IMR-90 (cell line): ENCODE measurements at regions of chr2 and their contacts with region 1.

Region 1: DNA sequence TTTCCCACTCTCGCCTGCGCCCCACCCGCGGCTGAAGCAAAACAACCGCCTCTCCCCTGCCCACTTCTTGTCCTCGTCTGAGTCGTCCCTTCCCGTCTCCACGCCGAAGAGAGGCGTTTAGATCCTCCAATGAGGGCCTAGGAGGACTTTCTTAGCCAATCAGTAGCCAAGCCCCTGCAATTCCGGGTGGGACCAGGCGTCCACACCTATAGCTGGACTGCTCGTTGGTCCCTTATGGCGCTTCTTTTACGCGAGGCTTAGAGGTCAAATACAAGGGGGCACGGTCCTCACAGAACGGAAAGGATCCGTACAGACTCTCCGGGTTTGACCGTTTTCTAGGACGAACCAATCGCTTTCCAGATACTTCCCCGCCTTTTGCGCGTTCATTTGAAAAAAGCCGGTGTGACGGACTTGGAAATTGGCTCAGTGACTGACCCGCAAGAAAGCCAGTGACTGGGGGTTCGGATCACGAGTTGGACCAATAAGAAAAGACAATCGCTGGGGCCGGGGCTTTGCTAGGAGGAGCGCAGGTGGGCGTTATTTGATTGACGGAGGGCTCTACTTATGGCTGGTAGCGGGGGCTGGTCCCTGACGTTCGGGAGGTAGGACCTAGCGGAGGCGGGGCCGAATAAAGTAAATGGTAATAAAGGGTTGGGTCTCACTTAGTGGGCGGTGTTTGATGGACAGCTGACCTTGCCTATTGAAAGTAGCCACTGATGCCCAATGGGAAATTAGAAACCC is 565 bp upstream of the PPM1B start:
- DNase-seq: peak; percentile 100
- ATAC-seq: peak; percentile 84
- H3K4me3 ChIP-seq: peak overlapping the region; percentile 69
- H3K27ac ChIP-seq: peak overlapping the region; percentile 76
- H3K4me1 ChIP-seq: peaks cover 2% of the 10 kb centered on the region; the same call in 1 of the 2 replicates
- H3K27me3 ChIP-seq: no peaks in the 10 kb centered on the region
- CTCF ChIP-seq: no peak
- POLR2A ChIP-seq: peak; percentile 51; the same call in 1 of the 2 replicates
- RAD21 ChIP-seq: no peak

Region 2: GRCh38 chr2:43872151-43872550 is 296.0 kb before region 1 on chr2:
- CTCF ChIA-PET with region 1: no interaction called
- POLR2A ChIA-PET with region 1: no interaction called
- dilution Hi-C with region 1: no loop called
- in situ Hi-C with region 1: no loop called
- intact Hi-C with region 1: no loop called
- DNase-seq: no peak
- ATAC-seq: no peak
- H3K4me3 ChIP-seq: no peak overlapping the region
- H3K27ac ChIP-seq: no peak overlapping the region
- H3K4me1 ChIP-seq: no peaks in the 10 kb centered on the region
- H3K27me3 ChIP-seq: peaks cover 35% of the 10 kb centered on the region
- CTCF ChIP-seq: no peak
- POLR2A ChIP-seq: no peak
- RAD21 ChIP-seq: no peak

Region 3: DNA sequence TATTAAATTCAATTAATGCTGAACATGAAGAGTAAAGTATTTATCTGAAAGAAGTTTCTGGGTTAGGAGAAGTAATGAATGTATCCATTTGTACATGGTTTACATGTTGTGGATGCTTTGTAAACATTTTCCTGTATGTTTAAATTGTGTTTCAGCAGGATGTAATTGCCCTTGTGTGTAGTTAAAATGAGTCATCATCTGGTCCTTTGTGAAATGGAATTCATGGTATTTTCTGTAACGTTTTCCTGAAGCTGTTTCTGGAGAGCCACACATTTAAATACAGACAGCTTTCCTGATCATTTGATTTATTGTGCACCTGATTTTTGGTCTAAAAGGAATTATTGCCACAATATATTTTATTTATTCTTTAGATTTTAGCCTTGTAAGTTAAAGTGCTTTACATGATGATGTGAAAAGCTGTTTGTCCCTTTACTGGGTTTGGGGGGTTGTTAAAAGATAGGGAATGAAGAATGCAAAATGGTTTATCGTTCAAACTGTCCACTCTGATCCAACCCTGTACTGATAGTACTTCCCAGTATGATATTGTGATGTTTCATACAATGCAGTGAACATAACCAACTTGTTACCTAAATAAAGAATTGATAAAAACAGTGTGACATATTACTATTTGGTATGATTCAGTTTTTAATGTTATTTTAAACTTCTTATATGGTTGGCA is 65.5 kb after region 1 on chr2:
- CTCF ChIA-PET with region 1: no interaction called
- POLR2A ChIA-PET with region 1: no interaction called
- dilution Hi-C with region 1: no loop called
- in situ Hi-C with region 1: no loop called
- intact Hi-C with region 1: loop called (anchors 2 kb)
- DNase-seq: peak; percentile 85
- ATAC-seq: peak; percentile 94
- H3K4me3 ChIP-seq: no peak overlapping the region
- H3K27ac ChIP-seq: peak overlapping the region; percentile 50; the same call in 1 of the 2 replicates
- H3K4me1 ChIP-seq: peaks cover 2% of the 10 kb centered on the region; the same call in 1 of the 2 replicates
- H3K27me3 ChIP-seq: no peaks in the 10 kb centered on the region
- CTCF ChIP-seq: no peak
- POLR2A ChIP-seq: no peak
- RAD21 ChIP-seq: 0 out of 2 replicates have a peak, but pooled peaks have one; percentile 4

Region 4: GRCh38 chr2:44291281-44292248 is 123.5 kb after region 1 on chr2:
- CTCF ChIA-PET with region 1: no interaction called
- POLR2A ChIA-PET with region 1: no interaction called
- dilution Hi-C with region 1: no loop called
- in situ Hi-C with region 1: no loop called
- intact Hi-C with region 1: loop called (anchors 1 kb)
- DNase-seq: peak; percentile 75
- ATAC-seq: peak; percentile 95
- H3K4me3 ChIP-seq: no peak overlapping the region
- H3K27ac ChIP-seq: no peak overlapping the region
- H3K4me1 ChIP-seq: peaks cover 7% of the 10 kb centered on the region
- H3K27me3 ChIP-seq: peaks cover 20% of the 10 kb centered on the region
- CTCF ChIP-seq: peak; percentile 74
- POLR2A ChIP-seq: no peak
- RAD21 ChIP-seq: peak; percentile 79

Region 5: DNA sequence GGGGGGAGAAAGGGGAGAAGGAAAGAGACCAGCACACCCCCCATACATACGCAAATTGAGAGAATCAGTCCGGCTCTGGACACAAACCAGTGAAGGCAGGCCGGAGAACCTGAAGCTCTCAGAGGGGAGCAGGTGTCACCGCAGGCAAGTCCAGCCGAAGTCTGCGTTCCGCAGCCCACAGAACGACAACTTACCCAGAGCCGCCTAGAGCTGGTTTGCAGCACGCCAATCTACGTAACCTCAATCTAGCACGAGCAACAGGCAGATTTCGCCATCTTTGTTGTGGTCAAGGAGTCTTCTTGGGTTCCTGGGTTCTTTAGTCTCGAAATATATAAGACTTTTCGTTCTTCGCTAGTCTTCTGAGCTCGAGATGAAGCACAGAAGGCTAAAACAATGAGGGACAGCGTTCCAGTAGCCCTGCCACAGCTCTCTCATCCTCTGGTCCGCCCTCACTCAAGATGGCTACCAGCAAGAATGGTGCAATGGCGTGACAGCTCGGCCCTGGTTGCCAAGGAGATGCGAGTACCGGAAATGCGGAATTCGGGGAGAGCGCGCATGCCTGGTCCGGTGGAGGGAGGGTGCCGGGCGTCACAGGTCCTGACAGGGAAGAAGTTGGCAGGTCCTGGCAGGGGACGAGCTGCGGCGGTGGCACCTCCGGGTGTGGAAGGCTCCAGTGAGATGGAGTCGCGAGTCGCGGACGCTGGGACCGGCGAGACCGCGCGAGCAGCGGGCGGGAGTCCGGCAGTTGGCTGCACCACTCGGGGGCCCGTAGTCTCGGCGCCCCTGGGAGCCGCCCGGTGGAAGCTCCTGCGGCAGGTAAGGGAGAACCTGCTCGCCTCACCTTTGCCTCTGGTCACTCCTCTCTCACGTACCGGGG is 193.5 kb after region 1 on chr2 and contains the starts of genes CAMKMT and PREPL:
- CTCF ChIA-PET with region 1: no interaction called
- POLR2A ChIA-PET with region 1: no interaction called
- dilution Hi-C with region 1: no loop called
- in situ Hi-C with region 1: no loop called
- intact Hi-C with region 1: loop called (anchors 5 kb)
- DNase-seq: peak; percentile 97
- ATAC-seq: peak; percentile 92
- H3K4me3 ChIP-seq: peak within 1 kb of the TSS; percentile 58
- H3K27ac ChIP-seq: peak within 1 kb of the TSS; percentile 98
- H3K4me1 ChIP-seq: no peaks in the 10 kb centered on the region
- H3K27me3 ChIP-seq: no peaks in the 10 kb centered on the region
- CTCF ChIP-seq: no peak
- POLR2A ChIP-seq: peak; percentile 86
- RAD21 ChIP-seq: no peak
- total RNA-seq, gene CAMKMT: 6.7 and 6.8 TPM in 2 replicates
- total RNA-seq, gene PREPL: 39.6 and 59.2 TPM in 2 replicates